ENCODE measurements at regions of chr20 and their contacts with region 1.

Region 1: GRCh38 chr20:57596998-57597939 is 23.0 kb downstream of the ZBP1 start:
- DNase-seq: peak; percentile 48 to 94
- H3K4me3 ChIP-seq: no peak overlapping the region
- CTCF ChIP-seq: peak in 1 of 3 donors; percentile 71
- POLR2A ChIP-seq: no peak

Region 2: DNA sequence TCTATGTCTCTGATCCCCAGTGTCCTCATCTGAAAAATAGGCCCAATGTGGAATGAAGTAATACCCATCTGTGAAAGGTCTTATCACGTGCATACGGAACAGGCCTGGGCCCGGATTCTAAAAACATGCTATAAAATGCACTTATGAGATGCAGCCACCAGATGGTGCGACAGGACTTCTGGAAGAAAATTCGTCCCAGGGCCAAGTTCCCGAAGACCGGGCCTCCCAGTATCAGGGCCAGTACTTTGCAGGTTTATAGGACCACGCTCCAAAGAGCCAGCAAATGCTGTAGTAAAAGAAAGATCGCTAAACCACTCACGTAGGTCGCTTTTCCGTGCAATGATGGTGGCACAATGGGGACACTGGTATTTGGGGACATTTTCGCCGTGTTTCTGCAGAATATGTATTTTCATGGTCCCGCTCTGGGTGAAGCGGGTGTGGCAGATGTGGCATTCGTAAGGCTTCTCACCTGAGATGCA is 83.0 kb before region 1 on chr20:
- intact Hi-C with region 1: loop called (anchors 2 kb)
- DNase-seq: peak; percentile 79 to 95
- H3K4me3 ChIP-seq: no peak overlapping the region
- CTCF ChIP-seq: peak in 1 of 3 donors; percentile 29
- POLR2A ChIP-seq: no peak

Region 3: GRCh38 chr20:57991211-57991881 is 394.1 kb after region 1 on chr20:
- intact Hi-C with region 1: no loop called
- DNase-seq: peak; percentile 81 to 93
- H3K4me3 ChIP-seq: no peak overlapping the region
- CTCF ChIP-seq: no peak
- POLR2A ChIP-seq: no peak

Region 4: GRCh38 chr20:58209652-58210397 is 612.6 kb after region 1 on chr20:
- intact Hi-C with region 1: loop called (anchors 2 kb)
- DNase-seq: peak; percentile 64 to 97
- H3K4me3 ChIP-seq: no peak overlapping the region
- CTCF ChIP-seq: peak in 1 of 3 donors; percentile 97
- POLR2A ChIP-seq: no peak